ENCODE measurements at regions of chr19 and their contacts with region 1.

Region 1: DNA sequence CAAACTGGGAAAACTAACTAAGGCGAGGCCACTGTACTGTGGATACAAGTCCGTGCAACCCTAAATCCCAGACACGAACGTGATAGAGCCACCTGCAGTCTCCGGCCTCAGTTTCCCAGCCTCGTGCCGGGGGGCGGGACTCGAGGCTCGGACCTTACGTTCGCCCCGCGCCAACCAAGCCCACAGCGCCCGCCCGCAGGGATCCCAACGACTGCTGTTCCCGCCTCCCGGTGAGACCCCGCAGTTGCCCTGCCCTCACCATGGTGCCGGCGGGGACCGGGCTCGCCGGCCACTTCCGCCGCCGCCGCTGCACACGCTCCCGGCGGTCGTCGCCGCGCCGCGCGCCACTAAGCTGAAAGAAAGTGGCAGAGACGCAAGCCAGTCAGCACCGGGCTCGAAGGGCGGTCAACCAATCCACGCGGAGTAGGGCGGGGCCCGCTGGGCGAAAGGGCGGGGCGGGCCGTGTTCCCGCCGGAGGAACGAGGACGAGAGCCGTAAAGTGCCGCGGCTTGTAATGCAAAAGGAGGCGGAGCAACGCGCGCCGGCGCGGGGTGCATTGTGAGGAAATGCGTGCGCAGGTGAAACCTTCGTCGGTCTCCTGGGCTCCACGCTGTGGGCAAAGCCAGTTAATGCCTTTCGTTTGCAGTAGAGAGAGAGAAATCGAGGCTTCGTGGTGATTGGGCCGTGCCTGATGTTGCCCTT is at the start of gene LSM4:
- DNase-seq: peak; percentile 99
- ATAC-seq: peak; percentile 98
- total RNA-seq, gene LSM4: 106 TPM

Region 2: GRCh38 chr19:18304458-18305310 is 18.2 kb before region 1 on chr19:
- intact Hi-C with region 1: loop called (anchors 2 kb)
- DNase-seq: peak; percentile 92
- ATAC-seq: peak; percentile 88